SK-N-SH (cell line): ENCODE measurements at regions of chr17 and their contacts with region 1.

Region 1: GRCh38 chr17:49556223-49556971 is 19.3 kb upstream of the NXPH3 start:
- DNase-seq: peak; percentile 98
- H3K4me3 ChIP-seq: no peak overlapping the region
- H3K27ac ChIP-seq: no peak overlapping the region
- H3K4me1 ChIP-seq: peaks cover 0 to 8% of the 10 kb centered on the region in 2 experiments; a peak in 1 of 4 replicates
- H3K27me3 ChIP-seq: peaks cover 20% of the 10 kb centered on the region; the same call in 1 of the 2 replicates
- CTCF ChIP-seq: peak; percentile 100
- EP300 ChIP-seq: no peak
- RAD21 ChIP-seq: peak; percentile 99

Region 2: GRCh38 chr17:48928876-48929811 is 627.3 kb before region 1 on chr17:
- CTCF ChIA-PET with region 1: no interaction called
- POLR2A ChIA-PET with region 1: no interaction called
- DNase-seq: no peak
- H3K4me3 ChIP-seq: no peak overlapping the region
- H3K27ac ChIP-seq: peak overlapping the region in 1 of 2 experiments; percentile 3; a peak in 1 of 4 replicates
- H3K4me1 ChIP-seq: no peaks in the 10 kb centered on the region
- H3K27me3 ChIP-seq: no peaks in the 10 kb centered on the region
- CTCF ChIP-seq: no peak
- EP300 ChIP-seq: no peak
- RAD21 ChIP-seq: no peak

Region 3: GRCh38 chr17:49381063-49381462 is 175.3 kb before region 1 on chr17:
- CTCF ChIA-PET with region 1: interaction called, 23 read pairs
- POLR2A ChIA-PET with region 1: no interaction called
- DNase-seq: no peak
- H3K4me3 ChIP-seq: no peak overlapping the region
- H3K27ac ChIP-seq: no peak overlapping the region
- H3K4me1 ChIP-seq: peaks cover 0 to 10% of the 10 kb centered on the region in 2 experiments; a peak in 1 of 4 replicates
- H3K27me3 ChIP-seq: no peaks in the 10 kb centered on the region
- CTCF ChIP-seq: no peak
- EP300 ChIP-seq: no peak
- RAD21 ChIP-seq: no peak

Region 4: DNA sequence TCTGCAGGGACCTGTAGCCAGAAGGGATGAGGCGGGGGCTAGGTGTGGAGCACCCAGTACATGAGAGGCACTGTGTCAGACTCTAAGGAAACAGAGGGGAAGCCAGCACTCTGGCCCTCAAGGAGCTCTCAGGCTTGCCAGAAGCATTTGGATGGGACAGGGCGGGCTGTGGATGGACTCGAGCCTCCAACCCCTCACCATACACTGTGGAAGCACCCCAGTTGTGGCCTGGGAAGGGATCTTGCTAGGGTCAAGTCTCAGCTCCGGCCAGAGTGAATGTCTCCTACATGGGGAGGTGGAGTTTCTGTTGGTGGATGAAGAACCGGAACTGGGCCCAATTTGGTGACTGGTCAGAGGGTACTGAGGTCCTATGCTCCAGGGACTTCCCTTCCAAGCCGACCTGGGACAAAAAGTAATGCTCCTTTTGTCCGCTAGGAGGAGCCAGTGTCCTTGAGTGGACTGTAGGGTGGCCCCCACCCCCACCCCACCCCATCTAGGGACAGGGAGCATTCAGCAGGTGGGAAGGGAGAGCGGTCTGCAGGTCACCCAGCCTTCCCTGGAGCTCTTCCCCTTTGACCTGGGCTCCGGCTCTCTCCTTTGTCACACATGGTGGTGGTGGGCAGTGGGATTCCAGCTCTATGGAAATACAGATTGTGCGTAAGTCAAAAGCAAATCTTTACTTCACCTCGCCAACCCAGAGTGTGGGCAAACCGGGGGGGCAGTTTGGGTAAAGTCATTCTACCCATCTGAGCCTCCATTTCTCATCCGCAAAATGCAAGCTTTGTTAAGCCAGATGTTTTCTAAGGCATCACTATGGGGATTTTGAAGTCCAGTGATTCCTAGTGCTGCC is 121.4 kb before region 1 on chr17:
- CTCF ChIA-PET with region 1: interaction called, 492 read pairs
- POLR2A ChIA-PET with region 1: interaction called, 4 read pairs
- DNase-seq: peak; percentile 92
- H3K4me3 ChIP-seq: no peak overlapping the region
- H3K27ac ChIP-seq: peak overlapping the region in 1 of 2 experiments; percentile 81; a peak in 2 of 4 replicates
- H3K4me1 ChIP-seq: peaks cover 3 to 39% of the 10 kb centered on the region in 2 experiments; a peak in 2 of 4 replicates
- H3K27me3 ChIP-seq: peaks cover 16% of the 10 kb centered on the region; the same call in 1 of the 2 replicates
- CTCF ChIP-seq: peak; percentile 77
- EP300 ChIP-seq: no peak
- RAD21 ChIP-seq: peak; percentile 86

Region 5: DNA sequence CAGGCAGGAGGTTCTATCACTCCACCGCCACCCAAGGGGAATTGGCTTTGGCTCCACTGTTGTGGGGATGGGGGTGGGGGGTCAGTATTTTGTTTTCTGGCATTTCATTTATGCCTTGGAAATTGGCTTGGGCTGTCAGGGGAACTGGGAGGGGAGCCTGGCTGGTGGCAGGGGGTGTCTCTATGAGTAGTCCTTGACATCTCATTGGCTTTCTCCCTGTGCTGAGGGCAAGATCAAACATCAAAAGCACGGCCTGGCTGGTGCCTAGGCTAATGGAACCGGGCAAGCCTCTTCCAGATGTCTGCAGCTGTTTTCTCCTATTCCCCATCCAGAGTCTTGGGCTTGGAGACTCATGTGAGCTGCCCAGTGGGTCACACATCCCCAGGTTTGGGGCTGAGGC is 78.7 kb before region 1 on chr17:
- CTCF ChIA-PET with region 1: interaction called, 117 read pairs
- POLR2A ChIA-PET with region 1: no interaction called
- DNase-seq: no peak
- H3K4me3 ChIP-seq: no peak overlapping the region
- H3K27ac ChIP-seq: no peak overlapping the region
- H3K4me1 ChIP-seq: peaks cover 0 to 34% of the 10 kb centered on the region in 2 experiments; a peak in 1 of 4 replicates
- H3K27me3 ChIP-seq: peaks cover 74% of the 10 kb centered on the region
- CTCF ChIP-seq: no peak
- EP300 ChIP-seq: no peak
- RAD21 ChIP-seq: no peak

Region 6: DNA sequence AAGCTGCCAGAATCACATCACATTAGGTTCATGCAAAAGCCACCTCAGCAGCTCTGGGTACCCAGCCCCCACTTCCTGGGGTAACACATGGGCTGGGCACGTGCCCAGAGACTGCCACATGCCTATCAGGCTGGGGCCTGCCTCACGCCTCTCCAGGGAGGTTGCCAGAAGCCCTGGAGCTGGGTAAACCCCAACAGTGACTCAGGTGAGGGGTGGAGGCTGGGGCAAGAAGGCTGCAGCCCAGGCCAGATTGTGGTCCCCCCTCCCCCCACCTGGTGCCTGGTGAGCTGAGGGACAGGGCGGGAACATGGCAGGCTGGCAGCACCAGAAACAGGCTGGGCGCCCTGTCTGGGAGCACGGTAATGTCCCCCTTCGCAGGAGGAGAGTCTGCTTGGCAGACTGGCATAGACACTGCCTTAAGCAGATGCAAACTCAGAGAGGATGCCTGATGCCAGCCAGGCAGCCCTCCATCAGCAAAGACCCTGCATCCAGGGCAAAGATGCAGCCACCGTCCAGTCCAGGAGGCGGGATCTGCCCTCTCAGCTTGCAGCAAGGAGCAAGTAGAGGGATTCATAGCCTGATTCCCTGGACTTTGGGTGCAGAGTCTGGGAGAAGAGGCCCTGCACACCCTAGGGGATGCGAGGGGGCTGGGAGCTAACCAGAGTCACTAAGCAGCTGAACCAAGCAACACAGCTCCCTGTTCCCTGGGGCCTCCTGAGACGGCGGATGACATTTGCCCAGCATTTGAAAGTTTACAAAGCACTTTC is 32.5 kb before region 1 on chr17:
- CTCF ChIA-PET with region 1: interaction called, 144 read pairs
- POLR2A ChIA-PET with region 1: no interaction called
- DNase-seq: peak; percentile 56
- H3K4me3 ChIP-seq: no peak overlapping the region
- H3K27ac ChIP-seq: peak overlapping the region in 1 of 2 experiments; percentile 66; a peak in 1 of 4 replicates
- H3K4me1 ChIP-seq: peaks cover 0 to 63% of the 10 kb centered on the region in 2 experiments; a peak in 1 of 4 replicates
- H3K27me3 ChIP-seq: peaks cover 8% of the 10 kb centered on the region; the same call in 1 of the 2 replicates
- CTCF ChIP-seq: no peak
- EP300 ChIP-seq: no peak
- RAD21 ChIP-seq: no peak

Region 7: DNA sequence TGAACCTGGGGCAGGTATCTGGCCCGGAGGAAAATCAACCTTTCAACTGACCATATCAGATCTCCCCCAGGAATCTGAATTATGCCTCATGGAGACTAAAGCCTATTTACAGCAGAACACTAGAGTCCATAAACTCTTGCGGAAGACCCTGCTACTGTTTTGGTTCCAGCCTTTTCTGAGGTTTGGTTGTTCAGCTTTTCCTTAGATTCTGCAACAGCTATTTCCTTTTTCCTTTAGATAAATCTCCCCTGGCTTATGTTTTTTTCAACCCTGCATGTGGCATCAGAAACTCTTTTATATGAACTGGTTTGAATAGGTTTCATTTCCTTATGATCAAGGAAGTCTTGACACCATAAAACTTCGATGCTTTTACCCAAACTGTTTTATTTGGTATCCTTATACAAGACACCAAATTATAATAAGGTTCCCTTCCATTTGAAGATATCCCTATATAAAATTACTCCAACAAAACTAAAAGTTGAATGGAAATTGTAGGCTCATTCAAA is 108.4 kb after region 1 on chr17:
- CTCF ChIA-PET with region 1: interaction called, 2,107 read pairs
- POLR2A ChIA-PET with region 1: no interaction called
- DNase-seq: no peak
- H3K4me3 ChIP-seq: no peak overlapping the region
- H3K27ac ChIP-seq: no peak overlapping the region
- H3K4me1 ChIP-seq: no peaks in the 10 kb centered on the region; a peak in 1 of 4 replicates
- H3K27me3 ChIP-seq: no peaks in the 10 kb centered on the region
- CTCF ChIP-seq: no peak
- EP300 ChIP-seq: no peak
- RAD21 ChIP-seq: no peak